ENCODE measurements at regions of chr2 and their contacts with region 1.

Region 1: GRCh38 chr2:240434728-240435456 is 571 bp upstream of the GPC1 start:
- DNase-seq: peak; percentile 77
- H3K4me3 ChIP-seq: peak overlapping the region; percentile 59
- H3K27ac ChIP-seq: peak overlapping the region; percentile 85
- H3K27me3 ChIP-seq: no peaks in the 10 kb centered on the region
- CTCF ChIP-seq: no peak

Region 2: DNA sequence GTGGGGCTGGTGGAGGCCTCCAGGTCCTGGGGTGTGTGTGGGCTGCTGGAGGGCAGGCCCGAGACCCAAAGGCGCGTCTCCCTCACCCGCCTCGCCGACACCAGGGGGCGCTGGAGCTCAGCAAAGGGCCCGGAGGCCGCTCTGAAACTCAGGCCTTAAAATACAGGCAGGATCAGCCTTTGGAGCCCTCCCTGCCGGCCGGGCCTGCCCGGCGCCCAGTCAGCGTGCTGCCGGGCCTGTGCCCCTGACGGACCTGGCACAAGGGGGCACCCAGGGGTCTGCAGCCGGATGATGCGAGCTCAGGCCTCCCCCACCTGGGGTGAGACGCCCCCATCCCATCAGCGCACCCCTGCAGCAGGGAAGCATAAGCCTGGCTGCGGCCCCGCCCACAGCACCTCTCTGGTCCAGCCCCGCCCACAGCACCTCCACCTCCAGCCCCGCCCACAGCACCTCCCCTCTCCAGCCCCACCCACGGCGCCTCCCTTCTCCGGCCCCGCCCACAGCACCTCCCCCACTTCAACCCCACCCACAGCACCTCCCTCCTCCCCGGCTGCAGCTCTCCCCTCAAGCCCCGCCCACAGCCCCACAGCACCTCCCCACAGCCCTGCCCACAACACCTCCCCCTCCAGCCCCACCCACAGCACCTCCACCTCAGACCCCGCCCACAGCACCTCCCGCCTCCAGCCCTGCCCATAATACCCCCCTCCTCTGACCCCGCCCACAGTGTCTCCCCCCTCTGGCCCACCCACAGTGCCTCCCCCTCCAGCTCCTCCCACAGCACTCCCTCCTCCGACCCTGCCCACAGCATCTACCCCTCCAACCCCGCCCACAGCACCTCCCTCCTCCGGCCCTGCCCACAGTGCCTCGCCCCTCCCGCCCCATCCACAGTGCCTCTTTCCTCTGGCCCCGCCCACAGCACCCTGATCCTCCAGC is 201.7 kb before region 1 on chr2:
- in situ Hi-C with region 1: loop called (anchors 10 kb)
- DNase-seq: peak; percentile 70
- H3K4me3 ChIP-seq: peak overlapping the region; percentile 43
- H3K27ac ChIP-seq: no peak overlapping the region
- H3K27me3 ChIP-seq: no peaks in the 10 kb centered on the region
- CTCF ChIP-seq: peak; percentile 90

Measured in brain microvascular endothelial cell (primary cell).